A673 (cell line): ENCODE measurements at regions of chr18 and their contacts with region 1.

Region 1: GRCh38 chr18:3498698-3499471 is 48.9 kb downstream of the TGIF1 start:
- DNase-seq: no peak
- H3K4me3 ChIP-seq: no peak overlapping the region
- H3K27ac ChIP-seq: no peak overlapping the region
- H3K4me1 ChIP-seq: peaks cover 7% of the 10 kb centered on the region
- H3K27me3 ChIP-seq: no peaks in the 10 kb centered on the region
- CTCF ChIP-seq: no peak

Region 2: GRCh38 chr18:3511922-3512372 is 13.1 kb after region 1 on chr18:
- CTCF ChIA-PET with region 1: interaction called, 3 read pairs
- POLR2A ChIA-PET with region 1: interaction called, 13 read pairs
- intact Hi-C with region 1: no loop called
- DNase-seq: peak; percentile 94
- H3K4me3 ChIP-seq: no peak overlapping the region
- H3K27ac ChIP-seq: peak overlapping the region; percentile 60
- H3K4me1 ChIP-seq: peaks cover 40% of the 10 kb centered on the region
- H3K27me3 ChIP-seq: no peaks in the 10 kb centered on the region
- CTCF ChIP-seq: no peak

Region 3: GRCh38 chr18:3655254-3656050 is 156.6 kb after region 1 on chr18:
- CTCF ChIA-PET with region 1: no interaction called
- POLR2A ChIA-PET with region 1: no interaction called
- intact Hi-C with region 1: no loop called
- DNase-seq: no peak
- H3K4me3 ChIP-seq: no peak overlapping the region
- H3K27ac ChIP-seq: peak overlapping the region; percentile 69
- H3K4me1 ChIP-seq: peaks cover 35% of the 10 kb centered on the region
- H3K27me3 ChIP-seq: no peaks in the 10 kb centered on the region
- CTCF ChIP-seq: no peak